ENCODE measurements at regions of chr17 and their contacts with region 1.

Region 1: DNA sequence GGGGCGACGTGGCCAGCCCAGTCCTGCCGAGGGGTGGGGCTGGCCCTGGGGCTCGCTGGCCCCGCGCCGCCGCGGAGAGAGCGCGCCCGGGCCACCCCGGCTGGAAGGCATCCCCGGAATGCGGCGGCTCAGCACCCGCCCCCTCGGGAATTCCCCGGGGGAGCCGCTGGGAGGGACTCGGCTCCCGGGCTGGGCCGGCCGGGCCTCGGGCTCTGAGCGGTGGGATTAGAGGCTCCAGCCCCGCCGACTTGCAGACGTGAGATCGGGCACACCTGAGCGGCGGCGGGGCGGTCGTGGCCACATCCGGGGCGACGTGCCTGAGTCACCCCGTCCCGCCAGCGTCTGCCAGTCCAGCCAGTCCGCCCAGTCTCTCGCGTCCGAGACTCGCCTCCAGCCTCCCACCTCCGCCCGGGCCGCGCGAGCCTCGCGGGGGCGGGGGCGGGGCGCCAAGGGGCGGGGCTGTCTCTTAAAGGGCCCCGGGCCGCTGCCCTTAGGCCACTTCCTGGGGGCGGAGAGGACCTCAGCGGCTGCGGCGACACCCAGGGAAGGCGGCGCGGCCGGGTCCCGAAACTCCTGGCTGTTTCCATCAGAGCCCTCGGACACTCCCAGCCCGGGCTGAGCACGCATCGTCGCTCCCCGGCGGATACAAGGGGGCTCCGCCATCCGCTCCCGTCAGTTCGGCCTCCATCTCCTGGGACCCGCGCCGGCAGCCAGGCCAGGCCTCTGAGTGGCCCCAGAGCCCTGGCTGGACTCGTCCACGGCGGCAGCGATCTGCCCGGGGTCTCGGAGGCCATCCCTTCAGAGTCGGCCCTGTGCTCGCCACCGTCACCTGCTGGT is at the start of gene KCTD11:
- DNase-seq: peak; percentile 95
- H3K4me3 ChIP-seq: peak within 1 kb of the TSS; percentile 71 to 91 (median 86)
- H3K27ac ChIP-seq: peak within 1 kb of the TSS; percentile 93 to 100 (median 98)
- H3K4me1 ChIP-seq: peaks cover 0 to 66% (median 50%) of the 10 kb centered on the region in 4 donors
- H3K27me3 ChIP-seq: no peaks in the 10 kb centered on the region
- CTCF ChIP-seq: no peak
- EP300 ChIP-seq: peak in 1 of 4 donors; percentile 23
- POLR2A ChIP-seq: peak; percentile 36 to 53
- total RNA-seq, gene KCTD11: 4.4 to 6.4 (median 5.5) TPM

Region 2: GRCh38 chr17:7329374-7329996 is 22.4 kb before region 1 on chr17:
- intact Hi-C with region 1: loop called (anchors 1 kb)
- DNase-seq: peak; percentile 100
- H3K4me3 ChIP-seq: peak overlapping the region; percentile 69 to 93 (median 83)
- H3K27ac ChIP-seq: peak overlapping the region; percentile 88 to 94 (median 94)
- H3K4me1 ChIP-seq: peaks cover 0 to 31% (median 20%) of the 10 kb centered on the region in 4 donors
- H3K27me3 ChIP-seq: no peaks in the 10 kb centered on the region
- CTCF ChIP-seq: no peak
- EP300 ChIP-seq: peak in 1 of 4 donors; percentile 41
- POLR2A ChIP-seq: peak; percentile 88 to 93

Region 3: DNA sequence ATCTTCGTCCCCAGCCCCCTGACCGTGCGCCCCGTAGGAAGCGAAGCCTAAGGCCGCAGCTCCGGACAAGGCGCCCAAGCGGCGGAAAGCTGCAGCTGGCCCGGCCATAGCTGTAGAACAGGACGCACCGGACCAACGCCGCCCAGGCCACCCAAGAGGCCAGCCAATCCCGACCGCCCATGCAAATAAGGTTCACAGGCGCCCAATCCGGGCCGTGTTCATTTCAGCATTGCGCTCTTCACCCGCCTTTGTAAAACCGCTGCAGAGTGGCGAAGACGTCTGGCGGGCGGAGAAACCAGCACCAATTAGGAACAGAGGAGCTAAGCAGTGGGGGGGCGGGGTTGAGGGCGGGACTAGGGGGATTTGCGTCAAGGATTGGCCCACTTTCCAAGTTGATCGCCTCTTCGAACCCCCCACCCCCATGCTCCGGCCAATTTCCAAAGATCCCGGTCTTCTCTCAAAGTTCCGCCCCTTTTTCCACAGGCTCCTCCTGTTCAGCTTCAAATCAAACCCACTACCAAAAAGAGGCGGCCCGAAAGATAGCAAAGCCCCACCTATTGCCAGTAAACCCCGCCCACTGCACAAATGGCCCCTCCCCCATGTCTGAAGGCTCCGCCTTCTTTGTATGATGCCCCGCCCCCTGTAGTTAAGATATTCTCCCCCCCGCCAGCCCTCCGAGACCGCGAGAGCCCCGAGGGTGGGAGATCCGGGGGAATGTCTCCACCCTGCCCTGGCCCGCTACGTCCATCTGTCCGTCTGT is 52.3 kb after region 1 on chr17 and contains the start of gene TMEM256:
- intact Hi-C with region 1: loop called (anchors 2 kb)
- DNase-seq: peak; percentile 100
- H3K4me3 ChIP-seq: peak within 1 kb of the TSS; percentile 70 to 93 (median 85)
- H3K27ac ChIP-seq: peak within 1 kb of the TSS; percentile 88 to 95 (median 92)
- H3K4me1 ChIP-seq: peaks cover 0 to 49% (median 34%) of the 10 kb centered on the region in 4 donors
- H3K27me3 ChIP-seq: no peaks in the 10 kb centered on the region
- CTCF ChIP-seq: no peak
- EP300 ChIP-seq: no peak
- POLR2A ChIP-seq: peak; percentile 90 to 97
- total RNA-seq, gene TMEM256: 19.0 to 152 (median 99.7) TPM

Region 4: DNA sequence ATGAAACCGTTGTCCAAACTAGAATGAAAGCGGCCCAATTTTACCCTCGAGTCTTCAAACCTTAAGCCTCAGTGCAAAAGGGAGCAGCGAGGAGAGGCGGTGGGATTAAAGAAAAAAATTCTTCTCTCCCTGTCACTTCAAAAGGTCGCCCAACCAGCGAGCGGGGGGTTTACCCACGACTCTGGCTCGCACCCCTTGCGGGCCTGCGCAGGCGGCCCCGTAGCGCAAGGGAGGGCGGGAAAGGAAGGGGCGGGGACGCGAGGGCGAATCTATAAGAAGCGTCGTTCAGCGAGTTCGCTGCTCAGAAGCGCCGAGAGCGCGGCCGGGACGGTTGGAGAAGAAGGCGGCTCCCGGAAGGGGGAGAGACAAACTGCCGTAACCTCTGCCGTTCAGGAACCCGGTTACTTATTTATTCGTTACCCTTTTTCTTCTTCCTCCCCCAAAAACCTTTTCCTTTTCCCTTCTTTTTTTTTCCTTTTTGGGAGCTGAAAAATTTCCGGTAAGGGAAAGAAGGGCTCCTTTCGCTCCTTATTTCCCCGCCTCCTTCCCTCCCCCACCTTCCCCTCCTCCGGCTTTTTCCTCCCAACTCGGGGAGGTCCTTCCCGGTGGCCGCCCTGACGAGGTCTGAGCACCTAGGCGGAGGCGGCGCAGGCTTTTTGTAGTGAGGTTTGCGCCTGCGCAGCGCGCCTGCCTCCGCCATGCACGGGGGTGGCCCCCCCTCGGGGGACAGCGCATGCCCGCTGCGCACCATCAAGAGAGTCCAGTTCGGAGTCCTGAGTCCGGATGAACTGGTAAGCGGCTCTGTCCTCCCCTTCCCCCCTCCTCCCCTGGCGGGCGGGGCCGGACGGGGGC is 132.4 kb after region 1 on chr17 and contains the start of gene POLR2A:
- intact Hi-C with region 1: loop called (anchors 1 kb)
- DNase-seq: peak; percentile 100
- H3K4me3 ChIP-seq: peak within 1 kb of the TSS; percentile 63 to 72 (median 64)
- H3K27ac ChIP-seq: peak within 1 kb of the TSS; percentile 94 to 100 (median 97)
- H3K4me1 ChIP-seq: peaks cover 0 to 74% (median 61%) of the 10 kb centered on the region in 4 donors
- H3K27me3 ChIP-seq: no peaks in the 10 kb centered on the region
- CTCF ChIP-seq: no peak
- EP300 ChIP-seq: peak in 2 of 4 donors; percentile 29 to 70
- POLR2A ChIP-seq: peak; percentile 100
- total RNA-seq, gene POLR2A: 30.1 to 43.2 (median 36.5) TPM